Caco-2 (cell line): ENCODE measurements at regions of chr12 and their contacts with region 1.

Region 1: DNA sequence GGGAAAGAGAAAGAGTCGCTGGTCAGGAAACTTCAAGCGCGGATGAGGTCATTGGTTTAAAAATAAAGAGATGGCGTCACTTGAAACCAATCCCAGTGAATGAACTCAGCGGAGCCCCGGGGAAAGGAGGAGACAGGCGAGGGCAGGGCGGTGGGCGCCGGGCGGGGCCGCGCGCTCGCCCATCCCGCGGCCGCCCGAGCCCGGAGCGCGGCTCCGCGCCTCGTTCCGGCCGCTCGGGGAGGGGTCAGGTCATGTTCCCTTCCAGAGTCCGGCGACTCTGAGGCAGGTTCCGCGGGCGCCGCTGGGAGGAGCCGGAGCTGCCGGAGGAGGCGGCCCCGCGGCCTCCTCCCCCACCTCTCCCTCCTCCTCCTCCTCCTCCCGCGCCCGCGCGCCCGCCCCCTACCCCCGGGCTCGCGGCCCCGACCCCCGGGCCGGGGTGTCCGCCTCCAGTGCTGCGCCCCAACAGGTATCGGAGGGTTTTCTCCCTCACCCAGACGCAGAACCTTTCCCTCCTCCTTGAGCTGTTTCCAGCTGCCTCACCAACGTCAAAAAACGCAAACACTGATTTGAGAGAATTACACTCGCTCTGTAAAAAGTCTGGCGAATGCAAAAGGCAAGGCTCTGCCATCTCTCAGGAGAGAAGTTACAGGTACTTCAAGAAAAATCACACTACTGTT is at the start of gene DUSP16:
- DNase-seq: peak; percentile 97 to 99
- H3K4me3 ChIP-seq: peak within 1 kb of the TSS; percentile 78
- H3K4me3 Mint-ChIP-seq: peak within 1 kb of the TSS; percentile 79
- H3K27ac Mint-ChIP-seq: peak within 1 kb of the TSS; percentile 86
- H3K4me1 ChIP-seq: peaks cover 30% of the 10 kb centered on the region
- H3K4me1 Mint-ChIP-seq: peaks cover 27% of the 10 kb centered on the region
- H3K27me3 ChIP-seq: no peaks in the 10 kb centered on the region
- H3K27me3 Mint-ChIP-seq: no peaks in the 10 kb centered on the region
- CTCF ChIP-seq: peak; percentile 29 to 34
- total RNA-seq, gene DUSP16: 63.9 and 76.8 TPM in 2 replicates

Region 2: GRCh38 chr12:12376646-12377448 is 185.9 kb before region 1 on chr12:
- CTCF ChIA-PET with region 1: interaction called, 25 read pairs
- POLR2A ChIA-PET with region 1: interaction called, 6 read pairs
- intact Hi-C with region 1: loop called (anchors 1 kb)
- DNase-seq: peak; percentile 64 to 71
- H3K4me3 ChIP-seq: no peak overlapping the region
- H3K4me3 Mint-ChIP-seq: no peak overlapping the region
- H3K27ac Mint-ChIP-seq: no peak overlapping the region
- H3K4me1 ChIP-seq: peaks cover 34% of the 10 kb centered on the region
- H3K4me1 Mint-ChIP-seq: peaks cover 38% of the 10 kb centered on the region
- H3K27me3 ChIP-seq: no peaks in the 10 kb centered on the region
- H3K27me3 Mint-ChIP-seq: no peaks in the 10 kb centered on the region
- CTCF ChIP-seq: peak; percentile 72 to 96

Region 3: GRCh38 chr12:12449467-12450025 is 113.2 kb before region 1 on chr12:
- CTCF ChIA-PET with region 1: no interaction called
- POLR2A ChIA-PET with region 1: no interaction called
- intact Hi-C with region 1: loop called (anchors 5 kb)
- DNase-seq: peak; percentile 67 to 69
- H3K4me3 ChIP-seq: no peak overlapping the region
- H3K4me3 Mint-ChIP-seq: no peak overlapping the region
- H3K27ac Mint-ChIP-seq: peak overlapping the region; percentile 34
- H3K4me1 ChIP-seq: peaks cover 25% of the 10 kb centered on the region
- H3K4me1 Mint-ChIP-seq: peaks cover 26% of the 10 kb centered on the region
- H3K27me3 ChIP-seq: no peaks in the 10 kb centered on the region
- H3K27me3 Mint-ChIP-seq: no peaks in the 10 kb centered on the region
- CTCF ChIP-seq: no peak

Region 4: DNA sequence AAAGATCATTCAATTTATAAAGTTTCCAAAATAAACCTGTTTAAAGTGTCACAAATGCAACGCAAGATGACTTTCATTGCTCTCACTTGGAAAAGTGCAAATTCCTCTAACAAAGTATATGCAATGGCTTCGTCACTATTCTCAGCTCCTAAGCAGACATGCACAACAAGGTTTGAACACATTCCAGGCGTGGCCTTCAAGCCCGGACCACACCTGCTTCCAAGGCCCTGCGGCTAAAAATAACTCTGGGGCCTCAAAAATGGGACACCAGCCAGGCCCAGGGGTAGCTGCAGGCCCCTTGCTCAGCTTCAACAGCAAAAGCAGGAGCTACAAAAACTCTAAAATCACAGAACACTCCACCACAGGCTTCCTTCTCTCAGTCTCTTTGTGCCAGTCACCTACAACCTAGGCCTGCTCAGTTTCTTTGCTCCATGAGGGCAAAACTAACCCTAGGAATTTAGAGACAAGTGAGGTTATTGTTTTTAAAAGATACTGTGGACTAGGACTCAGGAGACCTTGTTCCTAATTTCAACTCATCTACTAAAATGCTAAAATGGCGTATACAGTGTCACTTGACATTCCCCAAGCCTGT is 29.4 kb before region 1 on chr12:
- CTCF ChIA-PET with region 1: interaction called, 3 read pairs
- POLR2A ChIA-PET with region 1: interaction called, 6 read pairs
- intact Hi-C with region 1: loop called (anchors 1 kb)
- DNase-seq: peak; percentile 79 to 91
- H3K4me3 ChIP-seq: no peak overlapping the region
- H3K4me3 Mint-ChIP-seq: peak overlapping the region; percentile 25
- H3K27ac Mint-ChIP-seq: peak overlapping the region; percentile 90
- H3K4me1 ChIP-seq: peaks cover 75% of the 10 kb centered on the region
- H3K4me1 Mint-ChIP-seq: peaks cover 46% of the 10 kb centered on the region
- H3K27me3 ChIP-seq: no peaks in the 10 kb centered on the region
- H3K27me3 Mint-ChIP-seq: no peaks in the 10 kb centered on the region
- CTCF ChIP-seq: no peak

Region 5: DNA sequence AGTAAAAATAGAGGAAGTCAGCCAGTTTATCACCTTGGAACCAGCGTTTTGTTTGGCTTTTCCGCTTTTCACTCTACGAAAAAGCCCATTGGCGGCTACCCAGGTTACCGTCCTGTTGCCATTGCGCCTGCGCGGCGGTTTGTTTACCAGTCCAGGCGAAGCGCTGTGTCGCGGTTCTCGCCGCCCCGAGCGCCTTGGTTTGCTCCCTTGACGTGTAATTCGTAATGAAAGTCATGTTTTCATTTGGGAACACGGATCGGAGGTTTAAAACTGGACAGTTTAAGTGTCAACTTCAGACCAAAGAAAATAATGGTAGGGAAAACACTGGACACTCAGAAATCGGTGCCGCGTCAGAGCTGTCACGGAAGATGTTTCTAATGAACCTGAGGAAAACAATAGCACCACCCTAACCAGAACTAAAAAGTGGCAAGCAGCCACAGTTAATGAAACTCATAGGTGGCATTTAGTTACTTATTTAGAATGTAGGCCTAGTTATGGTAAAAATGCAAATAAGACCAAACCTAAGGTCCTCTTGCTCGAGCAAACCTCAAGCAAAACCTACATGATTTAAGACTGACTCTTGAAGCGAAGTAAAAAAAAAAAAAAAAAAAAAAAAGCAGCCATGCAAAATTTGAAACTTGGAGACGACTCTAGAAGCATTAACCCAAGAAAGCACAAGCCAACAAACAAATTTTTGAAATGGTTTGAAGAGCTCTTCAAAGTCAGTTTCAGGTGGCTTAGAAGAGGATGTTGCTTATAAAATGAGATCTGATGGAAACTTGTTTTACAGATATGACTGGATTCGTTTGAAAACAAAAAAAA is 134.1 kb after region 1 on chr12:
- CTCF ChIA-PET with region 1: no interaction called
- POLR2A ChIA-PET with region 1: no interaction called
- intact Hi-C with region 1: loop called (anchors 2 kb)
- DNase-seq: peak; percentile 91 to 93
- H3K4me3 ChIP-seq: peak overlapping the region; percentile 72
- H3K4me3 Mint-ChIP-seq: peak overlapping the region; percentile 79
- H3K27ac Mint-ChIP-seq: peak overlapping the region; percentile 90
- H3K4me1 ChIP-seq: peaks cover 14% of the 10 kb centered on the region
- H3K4me1 Mint-ChIP-seq: peaks cover 16% of the 10 kb centered on the region
- H3K27me3 ChIP-seq: no peaks in the 10 kb centered on the region
- H3K27me3 Mint-ChIP-seq: no peaks in the 10 kb centered on the region
- CTCF ChIP-seq: no peak

Region 6: DNA sequence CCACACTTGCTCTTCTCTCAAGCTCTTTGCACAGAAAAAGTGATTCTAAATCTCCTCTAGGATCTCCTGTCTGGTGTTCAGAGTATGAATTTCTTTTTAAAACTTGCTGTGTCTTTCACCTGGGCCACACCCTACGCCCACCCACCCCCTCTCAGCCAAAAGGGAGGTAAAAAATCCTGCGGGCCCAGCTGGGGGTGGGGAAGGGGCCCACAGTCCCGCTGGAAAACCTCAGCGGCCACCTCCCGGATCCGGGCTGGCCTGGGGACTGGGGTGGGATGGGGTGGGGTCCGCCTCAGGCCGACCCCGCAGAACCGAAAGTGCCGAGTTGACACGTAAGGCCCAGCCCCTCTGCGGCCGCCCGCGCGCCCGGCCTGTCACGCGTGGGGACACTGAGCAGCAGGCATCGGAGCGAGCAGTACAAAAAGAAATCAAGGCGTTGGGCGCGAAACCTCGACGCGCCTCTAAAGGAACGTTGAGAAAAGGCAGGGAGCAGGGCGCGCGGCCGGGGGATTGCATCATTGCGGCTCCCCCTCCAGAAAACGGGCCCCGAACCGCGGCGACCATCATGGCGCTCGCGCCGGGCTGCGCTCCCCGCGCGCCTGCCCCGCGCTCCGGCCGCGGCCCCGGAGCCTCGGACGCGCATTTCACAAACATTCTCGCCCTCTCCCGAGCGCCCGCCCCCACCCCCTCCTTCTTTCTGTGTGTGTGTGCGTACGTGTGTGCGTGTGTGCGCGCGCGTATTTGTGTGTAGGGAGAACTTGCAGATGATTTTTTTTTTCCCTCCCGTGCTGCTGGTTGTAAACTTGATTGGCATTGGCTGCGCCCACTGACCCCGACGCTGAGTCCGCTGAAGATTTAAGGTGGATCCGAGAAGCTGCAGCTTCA is 162.2 kb after region 1 on chr12:
- CTCF ChIA-PET with region 1: no interaction called
- POLR2A ChIA-PET with region 1: no interaction called
- intact Hi-C with region 1: loop called (anchors 2 kb)
- DNase-seq: peak; percentile 97 to 99
- H3K4me3 ChIP-seq: peak overlapping the region; percentile 92
- H3K4me3 Mint-ChIP-seq: peak overlapping the region; percentile 100
- H3K27ac Mint-ChIP-seq: peak overlapping the region; percentile 92
- H3K4me1 ChIP-seq: peaks cover 32% of the 10 kb centered on the region
- H3K4me1 Mint-ChIP-seq: peaks cover 19% of the 10 kb centered on the region
- H3K27me3 ChIP-seq: no peaks in the 10 kb centered on the region
- H3K27me3 Mint-ChIP-seq: no peaks in the 10 kb centered on the region
- CTCF ChIP-seq: no peak